Dorsolateral prefrontal cortex (tissue), 120 donors: ENCODE measurements at regions of chr15 and their contacts with region 1.

Region 1: DNA sequence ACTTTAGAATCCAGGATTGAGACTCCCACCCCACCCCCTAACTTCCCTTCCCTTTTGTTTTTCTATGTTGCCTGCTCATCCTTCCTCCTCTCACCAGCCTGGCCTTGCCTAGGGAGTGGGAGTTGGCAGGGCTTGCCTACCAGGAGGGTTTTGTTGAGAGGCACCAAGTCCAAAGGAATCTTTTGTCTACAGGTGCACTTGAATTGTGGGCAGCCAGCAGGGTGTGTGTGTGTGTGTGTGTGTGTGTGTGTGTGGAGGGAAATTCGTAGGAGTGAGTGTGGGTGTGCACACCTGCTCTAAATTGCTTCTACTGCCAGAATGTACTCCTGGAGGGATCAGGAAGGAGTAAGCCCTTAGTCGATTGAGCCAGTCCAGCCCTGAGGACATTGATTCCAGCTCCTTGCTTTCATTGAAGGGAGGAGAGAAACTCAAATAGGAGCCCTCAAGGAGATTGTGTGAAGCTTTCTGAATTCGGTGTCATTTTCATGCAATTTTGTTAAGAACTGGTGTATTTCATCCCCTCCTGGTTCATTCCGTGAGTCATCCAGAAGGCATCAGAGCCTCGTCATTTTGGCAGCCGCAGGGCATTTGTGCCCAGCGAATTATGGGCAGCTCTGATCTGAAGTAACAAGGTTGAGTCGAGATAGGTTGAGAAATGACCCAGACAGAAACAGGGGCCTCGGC is 112.1 kb downstream of the SLCO3A1 start:
- DNase-seq: peak in 5 of 10 donors; percentile 39 to 70 (median 39)
- H3K4me3 ChIP-seq: peak overlapping the region in 12 of 59 donors; percentile 3 to 42 (median 18)
- H3K27ac ChIP-seq: peak overlapping the region in 58 of 59 donors; percentile 29 to 93 (median 82)
- H3K27me3 ChIP-seq: no peaks in the 10 kb centered on the region
- CTCF ChIP-seq: peak in 1 of 56 donors; percentile 10

Region 2: GRCh38 chr15:92005154-92005553 is 39.5 kb after region 1 on chr15:
- intact Hi-C with region 1: loop called in 1 of 2 experiments (anchors 5 kb)
- DNase-seq: no peak
- H3K4me3 ChIP-seq: no peak overlapping the region
- H3K27ac ChIP-seq: peak overlapping the region in 1 of 59 donors; percentile 69
- H3K27me3 ChIP-seq: no peaks in the 10 kb centered on the region
- CTCF ChIP-seq: no peak